ENCODE measurements at regions of chr5 and their contacts with region 1.

Region 1: GRCh38 chr5:135977375-135977928 is 22.7 kb upstream of the LECT2 start:
- DNase-seq: peak; percentile 78

Region 2: GRCh38 chr5:135993880-135994636 is 16.6 kb after region 1 on chr5:
- CTCF ChIA-PET with region 1: interaction called, 14 read pairs
- POLR2A ChIA-PET with region 1: interaction called, 6 read pairs
- DNase-seq: no peak

Region 3: GRCh38 chr5:136054142-136055019 is 76.9 kb after region 1 on chr5:
- CTCF ChIA-PET with region 1: interaction called, 15 read pairs
- POLR2A ChIA-PET with region 1: no interaction called
- DNase-seq: no peak

Region 4: DNA sequence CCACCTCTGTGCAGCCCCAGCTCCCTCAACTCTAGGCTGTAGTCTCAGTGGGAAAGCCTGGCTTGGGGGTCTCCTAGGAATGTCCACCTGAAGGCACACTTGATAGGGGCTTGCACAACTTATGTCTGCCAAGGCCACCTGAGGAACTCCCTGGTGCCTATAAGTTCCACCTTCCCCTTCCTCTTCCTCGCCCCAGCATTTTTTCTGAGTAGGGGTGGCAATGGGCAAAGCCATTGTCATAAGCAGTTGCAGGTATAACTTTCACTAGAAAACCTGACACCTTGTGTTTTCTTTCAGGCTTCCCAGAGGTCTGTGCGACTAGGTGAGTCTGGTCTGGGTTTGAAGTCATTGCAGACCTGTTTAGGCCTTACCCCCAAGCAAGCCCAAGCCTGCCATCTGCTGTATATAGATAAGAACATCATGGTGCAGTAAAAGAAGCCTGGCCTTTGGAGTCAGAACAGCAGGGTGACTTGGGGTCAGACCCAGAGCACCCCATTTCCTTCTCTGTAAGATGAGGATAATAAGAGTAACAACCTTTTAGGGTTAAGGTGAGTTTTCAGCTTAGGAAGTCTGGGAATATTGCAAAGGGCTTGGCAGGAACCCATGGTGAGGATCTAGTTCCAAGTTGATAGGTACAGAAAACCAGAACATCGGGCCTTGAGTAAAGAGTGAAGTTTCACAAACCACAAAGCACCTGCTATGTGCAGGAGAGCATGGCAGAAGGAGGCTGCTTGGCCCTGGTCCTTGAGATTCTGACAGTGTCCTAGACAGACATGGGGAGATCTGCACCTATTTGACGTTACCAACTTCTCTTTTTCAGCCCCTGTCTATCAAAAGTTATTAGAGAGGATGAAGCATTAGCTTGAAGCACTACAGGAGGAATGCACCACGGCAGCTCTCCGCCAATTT is 85.2 kb after region 1 on chr5:
- CTCF ChIA-PET with region 1: interaction called, 15 read pairs
- POLR2A ChIA-PET with region 1: no interaction called
- DNase-seq: peak; percentile 49